ENCODE measurements at regions of chr17 and their contacts with region 1.

Region 1: DNA sequence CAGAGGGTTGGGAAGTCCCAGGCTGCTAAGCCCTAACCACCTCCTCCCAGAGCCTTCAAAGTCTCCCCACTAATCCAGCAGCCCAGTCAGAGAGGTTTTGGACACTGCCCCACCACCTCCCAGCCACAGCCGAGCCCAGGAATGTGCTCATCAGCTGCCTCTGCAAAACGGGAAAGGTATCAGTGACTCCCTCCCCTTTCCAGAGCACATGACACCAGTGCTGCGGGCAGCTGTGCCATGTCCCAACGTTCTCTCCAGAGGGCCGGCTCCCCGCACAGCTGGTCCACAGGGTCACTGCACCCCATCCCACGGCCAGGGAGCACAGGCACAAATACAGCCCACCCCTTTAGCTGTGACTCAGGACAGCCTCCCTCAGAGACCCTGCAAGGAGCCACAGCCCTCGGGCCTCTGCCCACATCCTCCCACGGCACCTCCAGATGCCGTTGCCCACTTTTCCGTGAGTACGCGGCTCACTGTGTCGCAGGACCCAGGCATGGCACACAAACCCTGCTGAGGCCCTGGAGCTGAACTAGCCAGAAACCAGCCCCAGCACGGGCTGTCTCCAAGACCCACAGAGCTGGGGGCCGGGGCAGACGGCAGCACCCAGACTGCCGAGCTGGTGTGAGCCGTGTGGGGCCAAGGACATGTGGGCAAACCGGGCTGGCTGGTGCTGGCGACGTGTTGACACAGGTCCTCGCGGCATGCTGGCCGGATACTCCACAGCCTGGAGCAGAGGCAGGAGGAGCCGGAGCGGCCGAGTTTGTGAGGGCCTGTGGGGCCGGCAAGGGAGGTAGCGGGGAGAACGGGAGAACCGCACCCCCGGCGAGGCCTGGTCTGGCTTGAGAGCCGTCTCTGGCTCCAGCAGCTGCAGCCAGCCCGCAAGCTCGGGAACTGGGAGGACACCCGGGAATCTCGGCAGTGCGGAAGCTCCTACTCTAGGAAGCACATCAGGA is 6.3 kb upstream of the PPP1R27 start:
- DNase-seq: no peak
- ATAC-seq: no peak
- H3K4me3 ChIP-seq: no peak overlapping the region
- H3K27ac ChIP-seq: no peak overlapping the region
- H3K4me1 ChIP-seq: peaks cover 4 to 50% of the 10 kb centered on the region in 2 experiments; a peak in 4 of 5 replicates
- H3K27me3 ChIP-seq: no peaks in the 10 kb centered on the region
- CTCF ChIP-seq: no peak
- EP300 ChIP-seq: no peak
- POLR2A ChIP-seq: no peak
- RAD21 ChIP-seq: no peak

Region 2: GRCh38 chr17:81854974-81855774 is 14.1 kb after region 1 on chr17:
- CTCF ChIA-PET with region 1: no interaction called
- POLR2A ChIA-PET with region 1: interaction called, 85 read pairs
- in situ Hi-C with region 1: no loop called
- intact Hi-C with region 1: no loop called
- DNase-seq: peak in 1 of 4 experiments; percentile 6
- ATAC-seq: no peak
- H3K4me3 ChIP-seq: no peak overlapping the region
- H3K27ac ChIP-seq: no peak overlapping the region; the same call in 2 of the 3 replicates
- H3K4me1 ChIP-seq: peaks cover 18 to 30% of the 10 kb centered on the region in 2 experiments
- H3K27me3 ChIP-seq: no peaks in the 10 kb centered on the region
- CTCF ChIP-seq: peak in 1 of 3 experiments; percentile 10; a peak in 1 of 6 replicates
- EP300 ChIP-seq: no peak
- POLR2A ChIP-seq: 0 out of 2 replicates have a peak, but pooled peaks have one; percentile 17
- RAD21 ChIP-seq: no peak

Measured in K562 (cell line).